ENCODE measurements at regions of chr1 and their contacts with region 1.

Region 1: GRCh38 chr1:88683541-88684481 is at the start of gene PKN2:
- DNase-seq: peak; percentile 98 to 99 (median 98)
- ATAC-seq: peak; percentile 99 to 100 (median 99)
- H3K4me3 ChIP-seq: peak within 1 kb of the TSS; percentile 70 to 91 (median 86)
- H3K27ac ChIP-seq: peak within 1 kb of the TSS; percentile 86 to 96 (median 94)
- H3K4me1 ChIP-seq: peaks cover 0 to 41% (median 27%) of the 10 kb centered on the region in 12 donors
- H3K27me3 ChIP-seq: no peaks in the 10 kb centered on the region
- CTCF ChIP-seq: peak in 11 of 12 donors; percentile 6 to 58 (median 20)
- POLR2A ChIP-seq: peak; percentile 34 to 90
- total RNA-seq, gene PKN2: 20.3 to 43.8 (median 34.3) TPM

Region 2: DNA sequence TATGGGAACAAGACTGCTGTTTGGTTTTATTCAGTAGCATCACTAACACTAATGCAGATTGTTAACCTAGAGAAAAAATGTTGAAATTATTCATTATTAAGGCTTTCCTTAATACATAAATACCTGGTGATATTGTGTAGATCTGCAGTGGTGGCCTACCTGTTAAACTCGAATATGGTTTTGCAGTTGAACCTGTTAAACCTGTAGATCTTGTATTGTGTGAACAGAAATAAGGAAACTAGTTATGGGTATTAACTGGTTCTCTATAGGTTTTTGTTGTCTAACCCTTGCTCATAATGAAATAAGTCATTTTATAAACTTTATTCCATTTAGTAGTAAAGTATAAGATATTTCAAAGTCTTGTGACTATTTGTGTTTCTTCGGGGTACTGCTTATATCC is 24.2 kb after region 1 on chr1:
- intact Hi-C with region 1: no loop called
- DNase-seq: no peak
- ATAC-seq: no peak
- H3K4me3 ChIP-seq: no peak overlapping the region
- H3K27ac ChIP-seq: no peak overlapping the region
- H3K4me1 ChIP-seq: peaks cover 0 to 10% (median 0%) of the 10 kb centered on the region in 12 donors
- H3K27me3 ChIP-seq: no peaks in the 10 kb centered on the region
- CTCF ChIP-seq: no peak
- POLR2A ChIP-seq: no peak

Region 3: DNA sequence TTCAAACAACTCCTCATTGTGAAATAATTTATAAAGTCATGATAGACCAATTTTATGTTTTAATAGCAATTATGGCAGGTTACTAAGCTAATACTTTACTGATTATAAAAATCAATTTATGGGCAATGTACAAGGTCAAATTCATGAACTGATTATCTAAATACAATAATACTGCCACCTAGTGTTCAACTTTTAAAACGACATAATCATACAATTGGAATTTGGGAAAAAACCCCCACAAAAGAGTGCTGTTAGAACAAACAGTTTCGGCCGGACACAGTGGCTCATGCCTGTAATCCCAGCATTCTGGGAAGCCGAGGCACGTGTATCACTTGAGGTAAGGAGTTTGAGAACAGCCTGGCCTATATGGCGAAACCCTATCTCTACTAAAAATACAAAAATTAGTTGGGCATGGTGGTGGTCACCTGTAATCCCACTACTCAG is 193.6 kb after region 1 on chr1:
- intact Hi-C with region 1: loop called in 1 of 10 experiments (anchors 10 kb)
- DNase-seq: no peak
- ATAC-seq: no peak
- H3K4me3 ChIP-seq: no peak overlapping the region
- H3K27ac ChIP-seq: no peak overlapping the region
- H3K4me1 ChIP-seq: peaks cover 0 to 51% (median 16%) of the 10 kb centered on the region in 12 donors
- H3K27me3 ChIP-seq: no peaks in the 10 kb centered on the region
- CTCF ChIP-seq: peak; percentile 45 to 76 (median 64)
- POLR2A ChIP-seq: no peak

Region 4: DNA sequence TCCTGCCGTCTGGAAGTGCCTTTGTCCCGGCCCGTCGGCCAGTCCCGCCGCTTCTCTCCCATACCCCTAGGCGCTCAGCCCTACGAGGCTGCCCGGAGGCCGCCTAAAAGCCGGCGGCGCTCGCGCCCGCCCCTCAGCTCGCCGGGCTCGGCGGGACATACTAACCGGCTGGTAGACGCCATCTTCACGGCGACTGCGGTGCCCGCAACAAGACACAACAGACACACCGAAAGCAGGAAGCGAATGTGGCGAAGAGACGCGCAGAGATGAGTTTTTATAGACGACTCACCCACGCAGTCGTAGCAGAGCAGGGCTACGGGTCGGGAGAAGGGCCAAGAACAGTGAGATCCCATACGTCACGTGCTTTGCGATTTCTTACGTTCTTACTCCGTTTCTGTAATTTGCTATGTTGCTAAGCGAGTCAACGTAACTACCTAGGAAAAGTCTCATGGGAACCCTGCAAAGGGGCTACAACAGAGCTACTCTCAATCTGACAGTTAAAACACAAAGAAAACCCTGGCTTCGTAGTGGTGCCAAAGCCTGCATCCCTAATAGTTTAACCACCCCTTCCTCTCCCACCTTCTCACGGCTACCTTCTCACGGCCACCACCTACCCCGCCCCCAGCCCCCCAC is 207.6 kb after region 1 on chr1 and contains the start of gene GTF2B:
- intact Hi-C with region 1: loop called in 2 of 10 experiments (anchors 5 to 10 kb)
- DNase-seq: peak; percentile 90 to 95 (median 94)
- ATAC-seq: peak; percentile 90 to 95 (median 94)
- H3K4me3 ChIP-seq: peak within 1 kb of the TSS; percentile 80 to 100 (median 93)
- H3K27ac ChIP-seq: peak within 1 kb of the TSS; percentile 81 to 97 (median 92)
- H3K4me1 ChIP-seq: peaks cover 6 to 35% (median 19%) of the 10 kb centered on the region in 12 donors
- H3K27me3 ChIP-seq: no peaks in the 10 kb centered on the region
- CTCF ChIP-seq: peak in 1 of 12 donors; percentile 10
- POLR2A ChIP-seq: peak in 1 of 2 donors; percentile 77
- total RNA-seq, gene GTF2B: 9.2 to 18.9 (median 12.5) TPM

Measured in heart left ventricle (tissue), 16 donors.